ENCODE measurements at regions of chr22 and their contacts with region 1.

Region 1: DNA sequence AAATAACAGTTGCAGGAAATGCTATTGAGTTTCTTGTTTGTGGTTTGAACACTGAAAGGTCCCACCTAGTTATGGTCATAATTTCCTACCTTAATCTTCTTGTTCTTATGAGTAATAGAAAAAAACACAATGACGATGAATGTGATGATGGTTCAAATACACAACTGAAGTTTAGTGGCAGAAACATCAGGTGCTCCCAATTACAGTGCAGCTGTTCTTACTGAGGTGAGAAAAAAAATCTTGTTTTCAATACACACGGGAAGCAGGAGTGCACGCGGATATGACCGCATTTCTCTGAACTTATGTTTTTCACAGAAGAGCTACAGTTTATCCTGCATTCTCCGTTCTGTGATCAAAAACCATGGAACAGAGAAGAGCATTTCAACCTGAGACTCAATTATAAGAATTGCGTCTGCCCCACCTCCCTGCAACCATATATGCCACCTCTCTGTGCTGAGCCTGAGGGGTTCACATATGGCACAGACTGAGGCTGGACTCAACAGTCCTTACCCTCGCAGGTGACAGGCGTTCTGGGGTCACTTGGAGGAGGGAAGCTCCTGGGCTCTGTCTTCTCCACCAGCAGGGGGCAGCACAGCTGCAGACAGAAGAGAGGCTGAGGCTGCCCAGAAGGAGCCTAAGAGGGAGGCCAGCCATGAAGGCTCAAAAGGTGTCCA is 99.7 kb upstream of the IGLL5 start:
- DNase-seq: peak; percentile 68
- H3K4me3 Mint-ChIP-seq: no peak overlapping the region
- H3K27ac Mint-ChIP-seq: no peak overlapping the region
- H3K4me1 Mint-ChIP-seq: no peaks in the 10 kb centered on the region
- H3K27me3 Mint-ChIP-seq: peaks cover 28% of the 10 kb centered on the region
- CTCF ChIP-seq: peak; percentile 79

Region 2: DNA sequence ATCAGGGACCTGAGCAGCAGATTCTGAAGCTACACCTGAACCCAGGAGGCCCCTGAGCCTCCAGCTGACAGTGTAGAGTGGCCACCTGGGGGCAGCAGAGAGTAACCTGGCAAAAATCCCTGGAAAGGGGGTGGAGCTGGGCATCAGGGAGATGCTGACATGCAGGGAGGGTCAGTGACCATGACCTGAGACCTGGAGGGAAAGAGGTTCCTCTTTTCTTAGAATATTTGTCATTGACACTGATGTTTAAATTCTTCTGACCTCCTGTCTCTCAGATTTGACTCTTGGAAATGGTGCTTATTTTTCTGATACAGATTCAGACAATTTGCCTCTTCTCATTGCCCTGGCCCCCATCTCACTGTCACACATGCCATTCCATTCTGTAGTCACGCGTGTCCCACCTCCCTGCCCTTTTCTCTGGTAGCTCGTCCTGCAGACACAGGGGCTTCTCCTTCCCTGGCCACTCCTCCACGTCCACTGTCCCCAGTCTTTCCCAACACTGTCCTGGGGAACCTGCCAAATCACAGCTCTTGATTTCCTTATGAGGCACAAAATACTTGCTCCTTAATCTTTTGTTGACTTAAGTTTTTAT is 17.5 kb before region 1 on chr22:
- CTCF ChIA-PET with region 1: interaction called, 13 read pairs
- POLR2A ChIA-PET with region 1: no interaction called
- intact Hi-C with region 1: no loop called
- DNase-seq: peak; percentile 69
- H3K4me3 Mint-ChIP-seq: no peak overlapping the region
- H3K27ac Mint-ChIP-seq: no peak overlapping the region
- H3K4me1 Mint-ChIP-seq: no peaks in the 10 kb centered on the region
- H3K27me3 Mint-ChIP-seq: peaks cover 96% of the 10 kb centered on the region
- CTCF ChIP-seq: peak; percentile 86

Region 3: DNA sequence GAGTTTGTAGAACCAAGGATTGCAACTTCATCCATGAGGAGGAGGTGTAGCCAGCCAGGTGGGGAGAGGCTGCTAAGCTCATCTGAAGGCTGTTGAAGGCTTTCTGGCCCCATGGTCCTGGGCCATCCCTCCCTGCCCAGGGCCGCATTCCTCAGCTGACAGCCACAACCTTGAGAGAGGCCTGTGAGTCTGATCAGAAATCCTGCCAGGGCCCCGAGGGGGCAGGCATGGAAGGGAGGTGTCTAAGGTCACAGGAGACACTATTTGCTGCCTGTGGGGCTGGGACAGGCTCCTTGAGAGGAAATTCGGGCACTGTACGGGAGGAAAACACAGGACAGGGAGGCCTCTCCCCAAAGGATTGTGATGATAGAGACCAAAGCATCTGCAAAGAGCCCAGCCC is 11.6 kb after region 1 on chr22:
- CTCF ChIA-PET with region 1: interaction called, 11 read pairs
- POLR2A ChIA-PET with region 1: no interaction called
- intact Hi-C with region 1: no loop called
- DNase-seq: no peak
- H3K4me3 Mint-ChIP-seq: no peak overlapping the region
- H3K27ac Mint-ChIP-seq: no peak overlapping the region
- H3K4me1 Mint-ChIP-seq: no peaks in the 10 kb centered on the region
- H3K27me3 Mint-ChIP-seq: peaks cover 46% of the 10 kb centered on the region
- CTCF ChIP-seq: no peak

Region 4: DNA sequence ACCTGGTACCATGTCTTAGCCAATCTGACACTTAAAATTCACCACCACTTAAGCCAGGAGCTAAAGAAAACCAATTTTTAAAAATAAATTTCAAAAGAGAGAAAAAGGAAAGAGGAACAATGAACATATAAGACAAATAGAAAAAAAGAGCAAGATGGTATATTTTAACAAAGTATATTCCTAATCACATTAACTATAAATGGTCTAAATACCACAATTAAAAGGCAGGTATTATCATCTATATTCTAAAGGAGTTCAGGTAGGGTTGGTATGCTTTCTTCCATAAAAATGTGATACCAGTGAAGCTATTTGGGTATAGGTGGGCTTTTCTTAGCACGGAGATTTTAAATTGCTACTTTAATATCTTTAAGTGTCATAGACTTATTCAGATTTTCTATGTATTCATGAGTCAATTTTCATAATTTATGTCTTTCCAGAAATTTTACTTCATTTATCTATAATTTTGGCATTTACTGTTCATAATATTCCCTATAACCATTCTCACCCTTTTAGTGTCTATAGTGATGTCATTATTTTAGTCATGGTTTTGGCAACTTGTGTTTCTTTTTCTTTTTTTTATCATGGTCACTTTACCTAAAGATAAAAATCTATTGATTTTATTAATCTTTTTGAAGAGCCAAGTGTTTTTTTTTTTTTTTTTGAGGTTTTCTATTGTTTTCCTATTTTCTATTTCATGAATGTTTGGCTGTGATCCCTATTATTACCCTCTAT is 43.2 kb after region 1 on chr22:
- CTCF ChIA-PET with region 1: no interaction called
- POLR2A ChIA-PET with region 1: no interaction called
- intact Hi-C with region 1: no loop called
- DNase-seq: no peak
- H3K4me3 Mint-ChIP-seq: no peak overlapping the region
- H3K27ac Mint-ChIP-seq: no peak overlapping the region
- H3K4me1 Mint-ChIP-seq: no peaks in the 10 kb centered on the region
- H3K27me3 Mint-ChIP-seq: peaks cover 85% of the 10 kb centered on the region
- CTCF ChIP-seq: no peak

Measured in MCF 10A (cell line).